ENCODE measurements at regions of chr16 and their contacts with region 1.

Region 1: DNA sequence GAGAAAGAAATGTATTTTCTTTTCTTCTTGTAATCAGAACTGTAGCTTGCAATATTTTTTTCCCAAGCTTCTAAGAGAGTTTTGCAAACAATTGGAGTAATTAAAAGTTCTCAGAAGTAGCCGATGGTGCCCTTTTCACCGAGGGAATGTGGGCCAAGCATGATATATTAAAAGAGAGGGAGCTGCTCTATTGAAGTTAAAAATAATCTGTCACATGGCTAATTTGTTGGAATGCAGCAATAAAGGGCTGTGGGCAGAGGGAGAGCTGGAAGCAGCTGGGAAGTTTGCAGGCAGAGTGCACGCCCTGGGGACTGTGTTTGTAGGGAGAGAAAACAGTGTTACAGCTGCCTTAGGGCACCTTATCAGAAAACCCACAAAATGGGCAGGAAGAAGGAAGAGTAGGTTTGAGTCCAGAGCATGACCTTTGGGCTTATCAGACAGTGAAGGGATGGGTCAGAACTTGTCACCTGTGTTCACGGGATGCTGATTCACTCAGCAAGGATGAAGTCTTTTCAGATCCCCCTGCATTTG is 18.5 kb upstream of the TERF2 start:
- DNase-seq: peak; percentile 90 to 96
- H3K4me3 ChIP-seq: peak overlapping the region; percentile 21
- H3K4me3 Mint-ChIP-seq: peak overlapping the region; percentile 43
- H3K27ac Mint-ChIP-seq: peak overlapping the region; percentile 50
- H3K4me1 ChIP-seq: peaks cover 53% of the 10 kb centered on the region
- H3K4me1 Mint-ChIP-seq: peaks cover 48% of the 10 kb centered on the region
- H3K27me3 ChIP-seq: no peaks in the 10 kb centered on the region
- H3K27me3 Mint-ChIP-seq: no peaks in the 10 kb centered on the region
- CTCF ChIP-seq: no peak

Region 2: GRCh38 chr16:69417520-69418199 is 13.3 kb after region 1 on chr16:
- CTCF ChIA-PET with region 1: interaction called, 4 read pairs
- POLR2A ChIA-PET with region 1: interaction called, 5 read pairs
- intact Hi-C with region 1: loop called (anchors 1 kb)
- DNase-seq: peak in 1 of 2 experiments; percentile 57
- H3K4me3 ChIP-seq: no peak overlapping the region
- H3K4me3 Mint-ChIP-seq: no peak overlapping the region
- H3K27ac Mint-ChIP-seq: peak overlapping the region; percentile 24
- H3K4me1 ChIP-seq: peaks cover 52% of the 10 kb centered on the region
- H3K4me1 Mint-ChIP-seq: peaks cover 7% of the 10 kb centered on the region
- H3K27me3 ChIP-seq: no peaks in the 10 kb centered on the region
- H3K27me3 Mint-ChIP-seq: no peaks in the 10 kb centered on the region
- CTCF ChIP-seq: no peak

Region 3: DNA sequence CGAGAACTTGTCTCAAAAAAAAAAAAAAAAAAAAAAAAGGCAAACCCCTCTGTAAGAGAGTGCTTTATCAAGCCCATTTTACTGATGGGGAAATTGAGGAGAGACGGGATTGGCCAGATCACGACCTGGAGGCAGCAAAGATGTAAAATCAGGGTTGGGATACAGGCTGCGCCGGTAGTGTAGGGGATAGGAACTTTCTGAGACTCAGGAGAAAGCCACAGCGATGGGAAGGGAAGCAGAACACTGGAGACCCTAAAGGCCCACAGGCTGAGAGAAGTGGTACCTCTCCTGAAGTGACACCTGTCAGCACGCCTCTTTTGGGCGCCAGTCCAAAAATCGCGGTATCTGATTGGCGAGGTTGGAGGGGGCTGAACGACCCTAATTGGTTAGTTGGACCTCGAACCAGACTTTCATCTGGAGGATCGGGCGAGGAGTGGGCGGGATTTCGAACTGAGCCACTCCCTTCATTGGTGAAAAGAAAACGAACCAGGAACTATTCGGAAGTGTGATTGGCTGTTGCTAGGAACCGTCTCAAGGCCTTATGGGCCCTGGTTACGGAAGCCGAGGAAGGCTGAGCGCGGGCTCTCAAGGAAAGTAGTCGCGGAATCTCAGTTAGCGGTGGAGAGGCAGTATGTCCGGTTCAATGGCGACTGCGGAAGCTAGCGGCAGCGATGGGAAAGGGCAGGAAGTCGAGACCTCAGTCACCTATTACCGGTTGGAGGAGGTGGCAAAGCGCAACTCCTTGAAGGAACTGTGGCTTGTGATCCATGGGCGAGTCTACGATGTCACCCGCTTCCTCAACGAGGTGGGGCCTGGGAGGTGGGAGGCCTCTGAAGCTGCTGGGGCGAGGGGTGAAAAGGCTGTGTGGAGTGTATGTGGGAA is 20.0 kb after region 1 on chr16 and contains the start of gene CYB5B:
- CTCF ChIA-PET with region 1: interaction called, 4 read pairs
- POLR2A ChIA-PET with region 1: interaction called, 9 read pairs
- intact Hi-C with region 1: loop called (anchors 1 kb)
- DNase-seq: peak; percentile 98 to 99
- H3K4me3 ChIP-seq: peak within 1 kb of the TSS; percentile 96
- H3K4me3 Mint-ChIP-seq: peak within 1 kb of the TSS; percentile 91
- H3K27ac Mint-ChIP-seq: peak within 1 kb of the TSS; percentile 93
- H3K4me1 ChIP-seq: peaks cover 14% of the 10 kb centered on the region
- H3K4me1 Mint-ChIP-seq: peaks cover 12% of the 10 kb centered on the region
- H3K27me3 ChIP-seq: no peaks in the 10 kb centered on the region
- H3K27me3 Mint-ChIP-seq: no peaks in the 10 kb centered on the region
- CTCF ChIP-seq: no peak
- total RNA-seq, gene CYB5B: 355 TPM in 2 replicates